ENCODE measurements at regions of chr7 and their contacts with region 1.

Region 1: DNA sequence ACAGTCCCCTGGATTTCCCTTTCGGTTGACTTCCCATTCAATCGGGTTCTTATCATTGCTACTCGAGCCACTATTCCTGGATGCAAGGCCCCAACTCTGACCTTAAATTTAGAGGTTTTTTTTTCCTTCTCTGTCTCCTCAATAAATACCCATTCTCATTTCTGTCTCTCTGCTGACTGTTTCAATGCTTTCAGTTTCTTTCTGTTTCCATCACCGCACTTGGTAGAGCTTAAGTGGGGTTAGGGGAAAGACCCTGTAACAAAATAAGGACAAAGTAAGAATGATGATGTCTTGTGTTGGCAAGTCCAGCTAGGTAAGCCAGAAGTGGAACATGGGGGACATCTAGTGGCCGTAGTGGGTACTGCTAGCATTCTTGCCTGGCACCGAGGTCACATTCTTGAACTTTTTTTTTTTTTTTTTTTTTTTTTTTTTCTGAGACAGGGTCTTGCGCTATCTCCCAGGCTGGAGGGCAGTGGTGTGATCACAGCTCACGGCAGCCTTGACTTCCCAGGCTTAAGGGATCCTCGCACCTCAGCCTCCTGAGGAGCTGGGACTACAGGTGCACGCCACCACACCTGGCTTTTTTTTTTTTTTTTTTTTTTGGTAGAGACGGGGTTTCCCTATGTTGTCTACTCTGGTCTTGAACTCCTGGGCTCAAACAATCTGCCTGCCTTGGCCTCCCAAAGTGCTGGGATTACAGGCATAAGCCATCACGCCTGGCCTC is 40.3 kb downstream of the ZC3HC1 start:
- DNase-seq: peak; percentile 55 to 91 (median 72)
- H3K4me3 ChIP-seq: no peak overlapping the region
- H3K27ac ChIP-seq: no peak overlapping the region
- H3K27me3 ChIP-seq: no peaks in the 10 kb centered on the region
- CTCF ChIP-seq: peak; percentile 76 to 94 (median 90)

Region 2: DNA sequence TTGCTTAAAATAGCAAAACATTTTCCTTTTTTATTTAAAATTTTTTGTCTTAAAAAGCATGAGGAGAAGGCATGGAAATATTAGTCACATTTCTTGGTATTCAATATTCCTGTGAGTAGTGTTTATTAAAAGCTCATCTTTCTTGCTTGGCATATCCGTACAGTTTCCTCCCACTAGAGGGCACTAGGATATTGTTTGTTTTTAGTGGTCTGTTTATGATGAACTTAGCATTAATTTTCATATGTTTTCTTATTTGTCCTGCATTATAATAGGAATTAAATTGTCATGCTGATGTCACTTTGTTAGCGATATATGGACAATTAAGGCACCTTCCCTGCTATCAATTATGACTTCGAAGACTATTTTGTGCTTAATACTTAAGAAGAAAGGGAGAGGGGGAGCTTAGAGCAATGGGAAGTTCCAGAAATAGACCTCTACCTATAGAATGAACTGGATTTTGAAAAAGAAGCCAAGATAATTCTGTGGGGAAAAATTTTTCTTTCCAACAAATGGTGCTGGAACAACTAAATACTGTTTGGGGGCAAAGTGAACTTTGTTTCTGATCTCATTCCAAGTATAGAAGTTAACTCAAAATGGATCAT is 667.7 kb before region 1 on chr7:
- intact Hi-C with region 1: loop called in 1 of 2 experiments (anchors 10 kb)
- DNase-seq: peak in 1 of 10 donors; percentile 7
- H3K4me3 ChIP-seq: no peak overlapping the region
- H3K27ac ChIP-seq: no peak overlapping the region
- H3K27me3 ChIP-seq: no peaks in the 10 kb centered on the region
- CTCF ChIP-seq: peak; percentile 56 to 88 (median 73)

Region 3: DNA sequence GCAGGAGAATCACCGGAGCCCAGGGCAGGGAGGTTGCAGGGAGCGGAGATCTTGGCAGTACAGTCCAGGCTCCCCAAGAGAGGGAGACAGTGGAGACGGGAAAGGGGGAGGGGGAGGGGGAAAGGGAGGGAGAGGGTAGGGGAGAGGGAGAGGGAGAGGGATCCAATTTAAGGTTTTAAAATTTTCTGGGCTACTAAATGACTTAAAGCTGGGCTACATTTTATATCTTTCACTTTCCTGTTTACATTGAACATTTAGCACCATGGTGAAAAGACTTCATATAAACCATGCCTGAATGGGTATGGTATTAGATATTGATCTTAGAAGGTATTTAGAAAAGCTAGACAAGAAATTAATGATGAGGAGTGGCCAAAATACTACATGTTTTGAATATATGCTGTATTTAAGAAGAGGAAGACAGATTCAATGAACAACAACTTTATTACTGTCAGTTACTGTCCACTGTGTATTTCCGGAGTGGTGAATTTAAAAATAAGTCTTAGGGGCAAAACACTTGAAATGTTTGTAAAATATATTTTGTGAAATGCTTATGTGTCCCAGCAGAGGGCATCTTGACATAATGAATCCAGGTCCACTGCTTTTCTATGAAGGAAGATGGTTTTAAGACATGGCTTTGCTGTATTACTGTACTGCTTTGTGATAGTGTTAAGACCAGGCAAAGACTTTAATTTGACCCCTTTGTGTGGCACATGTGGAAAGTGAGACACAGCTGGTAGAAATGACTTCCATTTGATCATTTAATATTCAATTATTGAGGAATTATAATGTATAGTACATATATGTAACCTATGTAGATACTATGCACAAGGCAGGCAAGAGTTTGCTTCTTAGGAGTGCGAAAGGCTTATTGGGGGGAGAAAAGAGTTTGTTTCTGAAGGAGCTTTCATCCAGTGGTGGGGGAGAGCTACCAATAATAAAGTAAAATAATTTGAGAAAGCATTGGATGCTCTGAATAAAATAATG is 346.5 kb before region 1 on chr7:
- intact Hi-C with region 1: loop called (anchors 2 to 5 kb)
- DNase-seq: no peak
- H3K4me3 ChIP-seq: no peak overlapping the region
- H3K27ac ChIP-seq: no peak overlapping the region
- H3K27me3 ChIP-seq: no peaks in the 10 kb centered on the region
- CTCF ChIP-seq: peak; percentile 26 to 77 (median 59)

Region 4: GRCh38 chr7:129698516-129699418 is 312.1 kb before region 1 on chr7:
- intact Hi-C with region 1: no loop called
- DNase-seq: no peak
- H3K4me3 ChIP-seq: no peak overlapping the region
- H3K27ac ChIP-seq: no peak overlapping the region
- H3K27me3 ChIP-seq: no peaks in the 10 kb centered on the region
- CTCF ChIP-seq: no peak

Region 5: DNA sequence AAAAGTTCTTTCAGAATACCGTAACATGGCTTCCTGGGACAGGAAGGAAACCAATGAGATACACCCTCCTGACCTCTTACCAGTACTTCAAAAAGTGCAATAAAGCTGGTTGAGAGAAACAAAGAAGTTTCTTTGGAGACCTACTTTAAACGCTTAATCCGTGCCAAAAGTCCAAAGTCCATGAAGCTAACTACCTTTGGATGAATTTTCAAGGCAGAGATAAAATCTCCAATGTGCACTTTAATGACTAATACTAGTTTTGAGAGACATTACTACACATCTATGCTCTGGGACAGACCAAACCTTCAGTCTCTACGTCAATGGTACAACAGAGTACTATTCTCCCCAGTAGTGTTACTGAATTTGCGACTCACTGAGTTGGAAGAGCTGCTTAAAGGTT is 104.2 kb before region 1 on chr7:
- intact Hi-C with region 1: loop called in 1 of 2 experiments (anchors 10 kb)
- DNase-seq: no peak
- H3K4me3 ChIP-seq: no peak overlapping the region
- H3K27ac ChIP-seq: peak overlapping the region in 3 of 59 donors; percentile 35 to 42 (median 37)
- H3K27me3 ChIP-seq: no peaks in the 10 kb centered on the region
- CTCF ChIP-seq: no peak

Region 6: DNA sequence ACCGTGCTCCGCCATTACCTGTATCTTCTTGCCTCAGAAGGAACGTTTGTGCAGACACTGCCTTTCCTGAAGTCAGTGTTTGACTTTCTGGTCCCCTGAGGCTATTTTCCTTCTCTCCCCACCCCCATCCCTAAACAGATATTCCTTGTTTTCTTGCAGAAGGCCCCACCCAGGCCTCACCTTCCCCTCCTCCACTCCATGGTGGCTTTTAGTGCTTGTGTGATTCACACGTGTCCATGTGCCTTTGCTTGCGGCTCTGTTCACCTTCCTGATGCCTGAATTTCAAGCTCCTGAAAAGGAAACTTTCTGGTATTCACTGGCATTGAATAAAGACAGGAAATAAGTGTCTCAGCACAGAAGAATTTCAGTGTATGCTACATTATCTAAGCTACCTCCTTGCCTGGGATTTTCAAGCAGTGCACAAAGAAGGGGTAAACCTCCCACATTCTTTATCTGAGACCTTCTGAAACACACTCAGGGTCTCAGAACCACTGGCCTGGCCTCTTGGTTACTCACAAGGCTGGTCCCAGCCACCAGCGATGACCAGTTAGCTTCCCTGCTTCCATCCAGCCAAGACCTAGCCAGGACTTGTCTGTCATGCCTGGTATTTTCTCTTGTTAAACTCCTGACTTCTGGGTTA is 40.9 kb before region 1 on chr7:
- intact Hi-C with region 1: no loop called
- DNase-seq: no peak
- H3K4me3 ChIP-seq: no peak overlapping the region
- H3K27ac ChIP-seq: no peak overlapping the region
- H3K27me3 ChIP-seq: no peaks in the 10 kb centered on the region
- CTCF ChIP-seq: no peak

Region 7: GRCh38 chr7:130127821-130128317 is 117.0 kb after region 1 on chr7:
- intact Hi-C with region 1: no loop called
- DNase-seq: no peak
- H3K4me3 ChIP-seq: no peak overlapping the region
- H3K27ac ChIP-seq: peak overlapping the region in 4 of 59 donors; percentile 7 to 53 (median 18)
- H3K27me3 ChIP-seq: no peaks in the 10 kb centered on the region
- CTCF ChIP-seq: no peak